B cell (primary cell): ENCODE measurements at regions of chr16 and their contacts with region 1.

Region 1: DNA sequence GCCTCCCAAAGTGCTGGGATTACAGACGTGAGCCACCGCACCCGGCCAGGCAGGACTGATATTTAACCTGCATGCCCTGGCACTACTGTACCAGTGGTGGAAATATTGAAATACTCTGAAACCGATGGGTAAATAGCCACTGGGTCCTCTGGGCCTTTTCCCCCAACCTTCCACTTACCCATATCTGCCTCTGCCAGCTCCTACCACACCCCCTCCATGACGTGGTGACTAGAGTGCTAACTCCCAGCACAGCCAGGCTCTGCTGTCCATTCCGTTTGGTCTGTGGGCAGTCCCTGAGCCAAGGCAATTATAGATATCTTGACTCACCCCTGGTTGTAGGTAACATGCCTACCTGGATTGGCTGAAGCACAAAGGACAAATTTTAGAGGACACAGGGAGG is 187.8 kb downstream of the PRKCB start:
- DNase-seq: no peak
- ATAC-seq: no peak
- H3K4me3 ChIP-seq: no peak overlapping the region
- H3K4me3 Mint-ChIP-seq: no peak overlapping the region
- H3K27ac ChIP-seq: no peak overlapping the region
- H3K27ac Mint-ChIP-seq: peak overlapping the region; percentile 8
- H3K4me1 ChIP-seq: peaks cover 55 to 72% of the 10 kb centered on the region in 2 donors
- H3K4me1 Mint-ChIP-seq: peaks cover 76% of the 10 kb centered on the region
- H3K27me3 ChIP-seq: no peaks in the 10 kb centered on the region
- H3K27me3 Mint-ChIP-seq: no peaks in the 10 kb centered on the region
- CTCF ChIP-seq: no peak

Region 2: DNA sequence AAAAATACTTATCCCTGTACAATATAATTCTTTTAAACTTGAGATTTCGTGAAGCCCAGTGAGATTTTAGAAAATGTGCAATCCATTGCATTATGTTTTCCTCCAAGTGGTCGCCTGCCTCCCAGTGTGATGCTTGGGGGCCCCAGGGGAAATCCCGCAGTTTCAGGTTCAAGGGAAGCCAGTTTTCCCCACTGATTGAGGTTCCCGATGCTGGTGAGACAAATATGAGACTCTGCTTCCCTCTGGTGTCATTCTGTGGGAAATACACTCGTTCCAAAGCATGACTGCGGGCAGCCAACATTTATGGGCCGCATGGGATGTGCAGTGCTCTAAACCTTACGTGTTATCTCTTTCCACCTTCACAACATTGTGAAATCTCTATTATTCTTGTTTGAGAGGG is 13.0 kb after region 1 on chr16:
- CTCF ChIA-PET with region 1: interaction called, 68 read pairs
- POLR2A ChIA-PET with region 1: interaction called, 3 read pairs
- intact Hi-C with region 1: no loop called
- DNase-seq: peak; percentile 69
- ATAC-seq: peak; percentile 33
- H3K4me3 ChIP-seq: no peak overlapping the region
- H3K4me3 Mint-ChIP-seq: peak overlapping the region; percentile 59
- H3K27ac ChIP-seq: no peak overlapping the region
- H3K27ac Mint-ChIP-seq: peak overlapping the region; percentile 73
- H3K4me1 ChIP-seq: peaks cover 27 to 34% of the 10 kb centered on the region in 2 donors
- H3K4me1 Mint-ChIP-seq: peaks cover 54% of the 10 kb centered on the region
- H3K27me3 ChIP-seq: no peaks in the 10 kb centered on the region
- H3K27me3 Mint-ChIP-seq: no peaks in the 10 kb centered on the region
- CTCF ChIP-seq: peak; percentile 84